Ovary (tissue), 10 donors: ENCODE measurements at regions of chr5 and their contacts with region 1.

Region 1: DNA sequence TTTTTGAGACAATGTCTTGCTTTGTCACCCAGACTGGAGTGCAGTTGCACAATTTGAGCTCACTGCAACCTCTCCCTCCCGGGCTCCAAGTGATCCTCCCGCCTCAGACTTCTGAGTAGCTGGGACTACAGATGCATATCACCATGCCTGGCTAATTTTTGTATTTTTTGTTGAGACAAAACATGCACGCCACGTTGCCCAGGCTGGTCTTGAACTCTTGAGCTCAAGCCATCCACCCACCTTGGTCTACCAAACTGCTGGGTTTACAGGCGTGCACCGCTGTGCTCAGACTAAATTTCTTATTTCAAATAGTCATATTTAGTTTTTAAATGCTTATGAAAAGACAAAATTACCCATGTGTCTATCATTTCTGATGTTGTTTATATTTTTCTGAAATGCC is 2324.1 kb downstream of the MAT2B start:
- DNase-seq: no peak
- H3K4me3 ChIP-seq: no peak overlapping the region
- H3K27ac ChIP-seq: no peak overlapping the region
- H3K4me1 ChIP-seq: no peaks in the 10 kb centered on the region
- H3K27me3 ChIP-seq: no peaks in the 10 kb centered on the region
- CTCF ChIP-seq: no peak
- EP300 ChIP-seq: no peak
- POLR2A ChIP-seq: no peak

Region 2: DNA sequence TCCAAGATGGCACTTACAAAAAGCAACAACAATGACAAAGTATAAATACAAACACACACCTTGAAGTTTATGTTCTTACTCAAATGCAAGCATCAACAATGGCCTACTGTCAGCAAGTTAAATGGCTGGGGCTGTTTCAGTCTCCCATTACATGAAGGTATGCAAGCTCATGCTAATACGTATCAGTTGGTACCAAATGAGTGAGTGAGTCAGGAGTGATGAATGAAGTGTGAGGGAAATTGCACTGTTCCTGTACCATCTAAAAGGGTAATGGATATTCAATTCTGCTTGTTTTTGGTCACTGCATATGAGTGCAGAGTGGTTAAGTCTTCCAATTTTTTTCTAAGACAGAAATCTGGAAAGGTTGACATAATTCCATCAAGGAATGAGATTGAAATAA is 1359.2 kb before region 1 on chr5:
- intact Hi-C with region 1: loop called in 1 of 4 experiments (anchors 5 kb)
- DNase-seq: no peak
- H3K4me3 ChIP-seq: no peak overlapping the region
- H3K27ac ChIP-seq: no peak overlapping the region
- H3K4me1 ChIP-seq: no peaks in the 10 kb centered on the region
- H3K27me3 ChIP-seq: no peaks in the 10 kb centered on the region
- CTCF ChIP-seq: no peak
- EP300 ChIP-seq: no peak
- POLR2A ChIP-seq: no peak